Endothelial cell of umbilical vein (primary cell): ENCODE measurements at regions of chr10 and their contacts with region 1.

Region 1: DNA sequence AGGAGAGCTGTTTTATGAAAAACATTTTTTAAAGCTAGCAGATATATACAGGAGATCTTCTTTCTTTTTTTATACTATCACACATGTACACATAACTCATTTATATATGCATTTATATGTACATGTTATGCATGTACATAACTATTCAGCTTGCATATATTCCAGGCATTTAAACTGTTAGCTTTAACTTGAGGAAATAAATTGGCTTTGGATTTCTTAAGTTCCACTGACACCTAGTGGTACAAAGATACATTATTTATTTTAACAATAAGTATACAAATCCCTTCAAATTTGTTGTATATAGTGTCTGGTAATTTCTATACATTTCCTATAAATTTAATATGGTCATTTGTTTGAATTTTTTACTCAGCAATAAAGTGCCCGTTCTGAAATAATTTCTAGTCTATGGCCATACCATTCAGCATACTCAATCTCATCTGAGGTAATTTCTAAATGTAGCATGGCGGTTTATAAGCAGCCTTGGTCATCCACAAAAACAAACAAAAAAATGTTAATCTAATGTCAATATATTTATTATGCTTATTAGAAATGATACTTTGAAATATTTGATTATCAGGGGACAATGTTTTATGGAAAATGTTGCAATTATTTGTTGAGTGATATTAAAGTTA is 11.6 kb downstream of the ZDHHC6 start:
- DNase-seq: peak; percentile 63
- H3K4me3 ChIP-seq: no peak overlapping the region
- H3K27ac ChIP-seq: no peak overlapping the region
- H3K4me1 ChIP-seq: no peaks in the 10 kb centered on the region
- H3K27me3 ChIP-seq: no peaks in the 10 kb centered on the region
- CTCF ChIP-seq: peak in 1 of 2 donors; percentile 12
- POLR2A ChIP-seq: no peak

Region 2: DNA sequence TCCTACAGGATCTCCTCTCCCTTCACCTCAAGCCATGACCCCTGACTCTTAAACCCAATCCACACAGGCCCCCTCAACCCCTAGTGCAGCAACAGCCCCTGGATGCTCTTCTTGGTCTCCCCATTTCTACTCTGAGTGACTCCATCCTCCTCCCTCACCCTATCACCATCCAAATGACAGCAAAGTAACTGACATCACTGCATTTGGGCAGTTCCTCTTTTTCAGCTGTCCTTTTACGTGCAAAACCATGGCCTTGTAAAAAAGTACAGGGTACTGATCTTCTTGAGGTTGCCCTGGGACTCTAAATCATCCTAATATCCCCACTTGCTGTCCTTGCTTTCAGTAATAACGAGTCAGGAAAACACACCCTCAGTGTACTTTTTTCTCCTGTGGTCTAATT is 903.4 kb before region 1 on chr10:
- CTCF ChIA-PET with region 1: no interaction called
- POLR2A ChIA-PET with region 1: no interaction called
- dilution Hi-C with region 1: no loop called
- intact Hi-C with region 1: no loop called
- DNase-seq: no peak
- H3K4me3 ChIP-seq: no peak overlapping the region
- H3K27ac ChIP-seq: no peak overlapping the region
- H3K4me1 ChIP-seq: no peaks in the 10 kb centered on the region
- H3K27me3 ChIP-seq: no peaks in the 10 kb centered on the region
- CTCF ChIP-seq: no peak
- POLR2A ChIP-seq: no peak

Region 3: GRCh38 chr10:112160834-112161233 is 274.3 kb before region 1 on chr10:
- CTCF ChIA-PET with region 1: interaction called, 34 read pairs
- POLR2A ChIA-PET with region 1: no interaction called
- dilution Hi-C with region 1: no loop called
- intact Hi-C with region 1: no loop called
- DNase-seq: no peak
- H3K4me3 ChIP-seq: no peak overlapping the region
- H3K27ac ChIP-seq: no peak overlapping the region
- H3K4me1 ChIP-seq: no peaks in the 10 kb centered on the region
- H3K27me3 ChIP-seq: no peaks in the 10 kb centered on the region
- CTCF ChIP-seq: no peak
- POLR2A ChIP-seq: no peak

Region 4: GRCh38 chr10:112307358-112308124 is 127.6 kb before region 1 on chr10:
- CTCF ChIA-PET with region 1: interaction called, 96 read pairs
- POLR2A ChIA-PET with region 1: no interaction called
- dilution Hi-C with region 1: no loop called
- intact Hi-C with region 1: no loop called
- DNase-seq: peak; percentile 23
- H3K4me3 ChIP-seq: no peak overlapping the region
- H3K27ac ChIP-seq: no peak overlapping the region
- H3K4me1 ChIP-seq: no peaks in the 10 kb centered on the region
- H3K27me3 ChIP-seq: peaks cover 6 to 27% of the 10 kb centered on the region in 2 experiments
- CTCF ChIP-seq: peak; percentile 73 to 82
- POLR2A ChIP-seq: no peak

Region 5: GRCh38 chr10:112361951-112362751 is 73.0 kb before region 1 on chr10:
- CTCF ChIA-PET with region 1: interaction called, 35 read pairs
- POLR2A ChIA-PET with region 1: no interaction called
- dilution Hi-C with region 1: no loop called
- intact Hi-C with region 1: loop called (anchors 2 kb)
- DNase-seq: peak; percentile 93
- H3K4me3 ChIP-seq: no peak overlapping the region
- H3K27ac ChIP-seq: peak overlapping the region; percentile 56
- H3K4me1 ChIP-seq: peaks cover 28% of the 10 kb centered on the region
- H3K27me3 ChIP-seq: no peaks in the 10 kb centered on the region
- CTCF ChIP-seq: peak in 1 of 2 donors; percentile 7
- POLR2A ChIP-seq: no peak

Region 6: DNA sequence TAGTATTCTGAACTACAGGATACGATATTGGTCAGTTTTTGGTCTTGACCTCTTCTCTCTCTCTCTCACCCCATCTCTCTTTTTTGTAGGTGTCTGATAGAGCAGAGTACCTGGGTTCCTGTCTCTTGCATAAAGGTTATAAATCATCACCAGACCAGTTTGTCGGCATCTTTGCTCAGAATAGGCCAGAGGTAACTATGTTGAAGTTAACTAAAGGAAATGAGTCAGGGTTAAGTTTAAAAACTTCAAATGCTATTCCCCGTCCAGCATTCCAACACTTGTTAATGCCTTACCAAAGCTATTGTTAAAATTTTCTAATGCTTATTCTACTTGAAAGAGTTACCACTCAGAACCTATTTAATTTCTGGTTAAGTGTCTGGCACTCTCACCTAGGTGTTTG is 30.5 kb before region 1 on chr10:
- CTCF ChIA-PET with region 1: interaction called, 12 read pairs
- POLR2A ChIA-PET with region 1: no interaction called
- dilution Hi-C with region 1: no loop called
- intact Hi-C with region 1: no loop called
- DNase-seq: peak; percentile 29
- H3K4me3 ChIP-seq: no peak overlapping the region
- H3K27ac ChIP-seq: no peak overlapping the region
- H3K4me1 ChIP-seq: peaks cover 10% of the 10 kb centered on the region
- H3K27me3 ChIP-seq: no peaks in the 10 kb centered on the region
- CTCF ChIP-seq: no peak
- POLR2A ChIP-seq: no peak

Region 7: DNA sequence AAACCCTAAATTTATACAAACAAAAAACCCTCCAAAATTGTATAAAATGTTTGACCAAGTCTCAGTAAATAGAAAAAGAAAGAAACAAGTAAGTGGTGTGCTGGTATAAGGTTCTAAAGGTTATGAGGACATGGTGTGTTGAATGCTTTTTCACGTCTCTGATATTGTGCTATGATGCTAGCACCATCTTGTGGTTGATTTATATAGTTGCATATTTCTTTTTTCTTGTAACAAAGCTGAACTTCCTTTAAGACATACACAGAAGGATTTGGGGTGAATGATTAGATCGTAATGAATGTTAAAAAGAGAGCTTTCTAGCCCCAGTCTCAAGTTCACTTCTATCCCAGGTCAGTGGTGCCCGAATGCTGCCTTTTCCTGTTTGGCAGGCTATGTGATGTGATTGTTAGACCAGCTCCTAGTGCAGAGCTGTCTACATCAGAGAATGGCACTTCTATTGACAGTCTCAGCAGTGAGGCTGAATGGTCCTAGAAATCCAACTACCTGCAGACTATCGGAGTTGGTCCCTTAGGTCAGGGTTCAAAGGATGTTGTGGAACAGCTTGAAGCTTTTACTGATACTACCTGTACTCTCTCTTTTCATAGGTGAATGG is 36.9 kb after region 1 on chr10:
- CTCF ChIA-PET with region 1: interaction called, 25 read pairs
- POLR2A ChIA-PET with region 1: no interaction called
- dilution Hi-C with region 1: no loop called
- intact Hi-C with region 1: no loop called
- DNase-seq: peak; percentile 66
- H3K4me3 ChIP-seq: no peak overlapping the region
- H3K27ac ChIP-seq: no peak overlapping the region
- H3K4me1 ChIP-seq: no peaks in the 10 kb centered on the region
- H3K27me3 ChIP-seq: no peaks in the 10 kb centered on the region
- CTCF ChIP-seq: peak; percentile 44 to 45
- POLR2A ChIP-seq: no peak

Region 8: DNA sequence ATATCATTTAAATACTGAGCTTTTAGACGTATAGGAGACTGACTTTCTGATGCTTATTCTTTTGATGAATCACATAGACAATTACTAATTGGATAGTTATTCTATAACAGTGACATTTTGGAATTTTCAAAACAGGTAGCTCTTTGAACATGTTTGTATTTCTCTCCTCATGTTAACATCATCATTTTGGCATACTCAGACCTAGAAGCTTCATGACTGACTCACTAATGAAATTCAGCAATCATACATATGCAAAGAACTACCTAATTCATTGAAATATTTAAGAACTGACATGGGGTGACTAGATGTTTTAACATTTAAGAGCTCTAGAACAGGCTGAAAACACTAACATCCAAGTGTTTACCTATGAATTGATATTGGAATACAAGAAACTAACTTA is 204.2 kb after region 1 on chr10:
- CTCF ChIA-PET with region 1: no interaction called
- POLR2A ChIA-PET with region 1: no interaction called
- dilution Hi-C with region 1: no loop called
- intact Hi-C with region 1: no loop called
- DNase-seq: no peak
- H3K4me3 ChIP-seq: no peak overlapping the region
- H3K27ac ChIP-seq: no peak overlapping the region
- H3K4me1 ChIP-seq: no peaks in the 10 kb centered on the region
- H3K27me3 ChIP-seq: no peaks in the 10 kb centered on the region
- CTCF ChIP-seq: no peak
- POLR2A ChIP-seq: no peak